ENCODE measurements at regions of chrX and their contacts with region 1.

Region 1: DNA sequence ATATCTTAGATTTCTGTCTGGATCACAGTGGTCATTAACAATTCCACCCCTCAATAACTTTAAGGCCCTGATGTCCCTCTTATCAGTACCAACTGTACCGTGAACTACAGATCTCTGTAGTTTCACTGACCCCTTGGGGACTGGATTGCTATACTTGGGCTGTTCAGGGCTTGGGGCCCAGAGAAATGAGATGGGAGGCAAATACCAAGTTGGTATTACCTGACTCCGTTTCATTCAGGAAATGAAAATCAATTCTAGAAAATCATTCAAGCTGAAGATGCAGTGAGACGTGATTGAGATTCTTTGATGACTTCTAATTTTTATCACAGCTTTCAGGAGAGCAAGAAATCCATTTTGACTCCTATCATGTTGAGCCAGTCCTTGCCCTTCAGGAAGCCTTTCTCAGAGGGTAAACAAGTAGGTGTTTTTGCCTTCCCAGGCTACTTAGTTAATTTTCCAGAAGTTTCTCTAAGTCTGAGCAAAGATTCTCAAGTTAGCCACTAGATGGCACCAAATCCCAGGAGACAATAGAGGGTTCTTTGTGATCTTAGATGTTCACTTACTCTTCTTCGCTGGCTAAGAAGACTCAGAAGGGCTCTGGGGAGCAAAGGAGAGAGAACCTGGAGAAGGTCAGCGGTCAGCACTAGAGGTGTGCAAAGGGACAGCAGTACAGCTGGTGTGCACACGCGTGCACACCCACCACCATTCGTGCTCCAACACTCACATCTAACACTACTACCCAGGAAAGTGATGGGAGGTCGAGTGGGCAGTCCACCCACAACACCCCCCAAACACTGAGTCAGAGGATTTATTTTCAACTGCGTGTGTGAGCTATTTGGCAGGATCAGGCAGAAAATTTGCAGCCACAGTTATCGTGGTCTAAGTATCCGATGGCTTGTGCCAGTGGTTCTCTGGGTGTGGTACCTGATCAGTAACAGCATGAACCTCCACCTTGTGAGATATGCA is 7.4 kb downstream of the HNRNPH2 start:
- DNase-seq: peak in 1 of 2 experiments; percentile 42
- H3K4me3 ChIP-seq: no peak overlapping the region
- H3K4me3 Mint-ChIP-seq: no peak overlapping the region
- H3K27ac Mint-ChIP-seq: no peak overlapping the region
- H3K4me1 ChIP-seq: no peaks in the 10 kb centered on the region
- H3K4me1 Mint-ChIP-seq: no peaks in the 10 kb centered on the region
- H3K27me3 ChIP-seq: no peaks in the 10 kb centered on the region
- H3K27me3 Mint-ChIP-seq: no peaks in the 10 kb centered on the region
- CTCF ChIP-seq: peak; percentile 36 to 57

Region 2: GRCh38 chrX:101117701-101118100 is 297.8 kb before region 1 on chrX:
- CTCF ChIA-PET with region 1: no interaction called
- POLR2A ChIA-PET with region 1: no interaction called
- intact Hi-C with region 1: no loop called
- DNase-seq: no peak
- H3K4me3 ChIP-seq: no peak overlapping the region
- H3K4me3 Mint-ChIP-seq: no peak overlapping the region
- H3K27ac Mint-ChIP-seq: no peak overlapping the region
- H3K4me1 ChIP-seq: no peaks in the 10 kb centered on the region
- H3K4me1 Mint-ChIP-seq: no peaks in the 10 kb centered on the region
- H3K27me3 ChIP-seq: no peaks in the 10 kb centered on the region
- H3K27me3 Mint-ChIP-seq: no peaks in the 10 kb centered on the region
- CTCF ChIP-seq: no peak

Region 3: GRCh38 chrX:101462892-101463291 is 47.4 kb after region 1 on chrX:
- CTCF ChIA-PET with region 1: no interaction called
- POLR2A ChIA-PET with region 1: no interaction called
- intact Hi-C with region 1: loop called (anchors 5 kb)
- DNase-seq: peak in 1 of 2 experiments; percentile 7
- H3K4me3 ChIP-seq: no peak overlapping the region
- H3K4me3 Mint-ChIP-seq: no peak overlapping the region
- H3K27ac Mint-ChIP-seq: no peak overlapping the region
- H3K4me1 ChIP-seq: no peaks in the 10 kb centered on the region
- H3K4me1 Mint-ChIP-seq: no peaks in the 10 kb centered on the region
- H3K27me3 ChIP-seq: no peaks in the 10 kb centered on the region
- H3K27me3 Mint-ChIP-seq: no peaks in the 10 kb centered on the region
- CTCF ChIP-seq: peak in 1 of 2 experiments; percentile 21

Region 4: DNA sequence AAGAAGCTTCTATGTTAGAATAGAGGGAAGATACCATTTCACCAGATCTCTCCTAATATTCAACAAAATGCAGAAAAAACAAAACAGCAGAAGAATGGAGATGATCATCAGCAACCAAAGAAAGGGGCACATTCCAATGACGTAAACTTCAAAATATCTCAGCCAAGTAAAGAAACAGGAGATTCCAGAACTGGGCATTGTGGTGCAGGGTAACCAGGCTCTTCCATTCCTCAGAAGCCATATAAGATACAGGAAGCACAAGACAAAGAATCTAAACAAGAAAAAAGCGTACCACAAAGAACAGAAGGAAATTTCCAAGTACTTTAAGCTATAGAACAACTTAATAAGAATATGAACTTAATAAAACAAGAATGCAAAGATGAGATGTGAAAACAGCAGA is 62.9 kb after region 1 on chrX:
- CTCF ChIA-PET with region 1: no interaction called
- POLR2A ChIA-PET with region 1: no interaction called
- intact Hi-C with region 1: no loop called
- DNase-seq: no peak
- H3K4me3 ChIP-seq: no peak overlapping the region
- H3K4me3 Mint-ChIP-seq: no peak overlapping the region
- H3K27ac Mint-ChIP-seq: no peak overlapping the region
- H3K4me1 ChIP-seq: no peaks in the 10 kb centered on the region
- H3K4me1 Mint-ChIP-seq: no peaks in the 10 kb centered on the region
- H3K27me3 ChIP-seq: no peaks in the 10 kb centered on the region
- H3K27me3 Mint-ChIP-seq: no peaks in the 10 kb centered on the region
- CTCF ChIP-seq: no peak

Region 5: GRCh38 chrX:101507372-101507771 is 91.9 kb after region 1 on chrX:
- CTCF ChIA-PET with region 1: no interaction called
- POLR2A ChIA-PET with region 1: no interaction called
- intact Hi-C with region 1: no loop called
- DNase-seq: no peak
- H3K4me3 ChIP-seq: no peak overlapping the region
- H3K4me3 Mint-ChIP-seq: no peak overlapping the region
- H3K27ac Mint-ChIP-seq: no peak overlapping the region
- H3K4me1 ChIP-seq: no peaks in the 10 kb centered on the region
- H3K4me1 Mint-ChIP-seq: no peaks in the 10 kb centered on the region
- H3K27me3 ChIP-seq: no peaks in the 10 kb centered on the region
- H3K27me3 Mint-ChIP-seq: peaks cover 2% of the 10 kb centered on the region
- CTCF ChIP-seq: no peak

Region 6: DNA sequence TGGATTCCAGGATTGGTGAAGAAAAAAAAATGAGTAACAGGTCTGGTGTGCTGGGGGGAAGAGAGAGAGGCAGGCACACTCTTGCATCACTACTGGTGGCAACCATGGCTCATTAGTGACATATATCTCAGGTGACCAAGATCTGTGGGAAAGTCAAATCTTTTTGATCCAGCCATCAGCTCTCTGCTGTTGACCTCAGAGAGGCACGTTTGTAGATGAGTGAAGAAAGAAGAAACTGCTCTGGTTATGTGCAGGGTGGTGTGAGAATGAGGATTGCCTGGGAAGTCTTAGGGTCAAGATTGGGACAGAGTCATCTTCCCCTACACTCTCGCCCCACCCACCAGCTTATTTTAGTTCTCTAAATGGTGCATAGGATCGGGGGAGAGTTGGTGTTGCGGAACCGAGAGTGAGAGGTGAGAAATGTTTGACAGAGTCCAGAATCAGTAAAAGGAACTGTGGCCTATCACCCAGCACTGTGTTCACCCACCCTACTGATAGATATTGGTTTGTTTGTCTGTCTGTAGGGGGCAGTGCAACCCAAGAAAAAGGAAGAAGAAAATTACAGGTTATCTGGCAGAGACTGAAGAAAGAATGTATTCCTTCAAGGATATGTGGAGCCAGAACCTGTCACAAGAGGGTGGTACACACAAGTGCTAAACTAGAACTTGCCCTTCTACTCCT is 180.4 kb after region 1 on chrX:
- CTCF ChIA-PET with region 1: no interaction called
- POLR2A ChIA-PET with region 1: no interaction called
- intact Hi-C with region 1: loop called (anchors 5 kb)
- DNase-seq: peak in 1 of 2 experiments; percentile 63
- H3K4me3 ChIP-seq: no peak overlapping the region
- H3K4me3 Mint-ChIP-seq: no peak overlapping the region
- H3K27ac Mint-ChIP-seq: no peak overlapping the region
- H3K4me1 ChIP-seq: no peaks in the 10 kb centered on the region
- H3K4me1 Mint-ChIP-seq: no peaks in the 10 kb centered on the region
- H3K27me3 ChIP-seq: no peaks in the 10 kb centered on the region; the same call in 1 of the 2 replicates
- H3K27me3 Mint-ChIP-seq: peaks cover 7% of the 10 kb centered on the region
- CTCF ChIP-seq: peak; percentile 47 to 56

Region 7: GRCh38 chrX:101759000-101759399 is 343.5 kb after region 1 on chrX:
- CTCF ChIA-PET with region 1: no interaction called
- POLR2A ChIA-PET with region 1: no interaction called
- intact Hi-C with region 1: loop called (anchors 1 kb)
- DNase-seq: peak; percentile 38 to 42
- H3K4me3 ChIP-seq: no peak overlapping the region
- H3K4me3 Mint-ChIP-seq: no peak overlapping the region
- H3K27ac Mint-ChIP-seq: no peak overlapping the region
- H3K4me1 ChIP-seq: no peaks in the 10 kb centered on the region
- H3K4me1 Mint-ChIP-seq: no peaks in the 10 kb centered on the region
- H3K27me3 ChIP-seq: no peaks in the 10 kb centered on the region
- H3K27me3 Mint-ChIP-seq: peaks cover 4% of the 10 kb centered on the region
- CTCF ChIP-seq: peak; percentile 7 to 36

Region 8: DNA sequence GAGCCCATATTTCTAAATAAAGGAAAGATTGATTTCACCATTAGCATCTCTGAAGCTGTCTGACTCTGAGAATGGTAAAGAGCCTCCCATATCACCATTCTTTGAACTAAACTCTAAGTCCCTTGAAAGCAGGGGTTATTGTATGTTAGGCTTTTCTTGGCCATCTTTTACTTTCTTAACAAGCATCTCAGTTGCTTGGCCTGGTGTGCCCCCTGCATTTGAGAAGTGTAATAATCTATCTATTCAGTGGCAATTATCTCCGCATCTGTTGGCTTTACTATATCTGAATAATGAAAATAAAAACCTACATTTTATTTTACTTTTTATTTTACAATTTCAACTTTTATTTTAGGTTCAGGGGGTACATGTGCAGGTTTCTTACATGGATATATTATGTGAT is 372.5 kb after region 1 on chrX:
- CTCF ChIA-PET with region 1: no interaction called
- POLR2A ChIA-PET with region 1: no interaction called
- intact Hi-C with region 1: no loop called
- DNase-seq: no peak
- H3K4me3 ChIP-seq: no peak overlapping the region
- H3K4me3 Mint-ChIP-seq: no peak overlapping the region
- H3K27ac Mint-ChIP-seq: no peak overlapping the region
- H3K4me1 ChIP-seq: no peaks in the 10 kb centered on the region
- H3K4me1 Mint-ChIP-seq: no peaks in the 10 kb centered on the region
- H3K27me3 ChIP-seq: no peaks in the 10 kb centered on the region
- H3K27me3 Mint-ChIP-seq: no peaks in the 10 kb centered on the region
- CTCF ChIP-seq: no peak

Region 9: DNA sequence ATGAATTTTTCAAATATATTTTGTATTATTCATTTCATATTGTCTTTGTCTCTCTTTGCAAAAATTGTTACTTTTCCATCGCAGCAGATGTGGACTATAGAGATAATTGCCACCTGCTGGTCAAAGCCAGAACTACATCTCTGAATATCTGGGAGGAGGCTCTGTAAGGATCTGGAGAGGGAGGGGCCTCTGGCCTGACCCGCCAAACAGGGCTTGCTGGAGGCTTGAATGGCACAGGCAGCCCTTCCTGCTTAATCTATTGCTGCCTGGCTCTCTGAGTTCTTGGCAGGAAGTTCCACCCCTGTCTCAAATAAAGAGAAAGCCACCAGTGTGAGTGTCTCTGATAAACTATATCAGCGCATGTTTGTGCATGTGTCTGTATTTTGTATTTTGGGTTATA is 383.9 kb after region 1 on chrX:
- CTCF ChIA-PET with region 1: no interaction called
- POLR2A ChIA-PET with region 1: no interaction called
- intact Hi-C with region 1: loop called (anchors 5 kb)
- DNase-seq: peak; percentile 77 to 79
- H3K4me3 ChIP-seq: no peak overlapping the region
- H3K4me3 Mint-ChIP-seq: peak overlapping the region; percentile 16
- H3K27ac Mint-ChIP-seq: no peak overlapping the region
- H3K4me1 ChIP-seq: no peaks in the 10 kb centered on the region
- H3K4me1 Mint-ChIP-seq: no peaks in the 10 kb centered on the region
- H3K27me3 ChIP-seq: no peaks in the 10 kb centered on the region
- H3K27me3 Mint-ChIP-seq: no peaks in the 10 kb centered on the region
- CTCF ChIP-seq: peak; percentile 41 to 45